OCI-LY7 (cell line): ENCODE measurements at regions of chr13 and their contacts with region 1.

Region 1: GRCh38 chr13:91185294-91185863 is 162.1 kb upstream of the MIR17HG start:
- DNase-seq: peak; percentile 44
- H3K4me3 ChIP-seq: no peak overlapping the region
- H3K27ac ChIP-seq: no peak overlapping the region
- H3K4me1 ChIP-seq: no peaks in the 10 kb centered on the region
- CTCF ChIP-seq: no peak

Region 2: GRCh38 chr13:90773681-90774080 is 411.7 kb before region 1 on chr13:
- CTCF ChIA-PET with region 1: no interaction called
- POLR2A ChIA-PET with region 1: no interaction called
- intact Hi-C with region 1: no loop called
- DNase-seq: no peak
- H3K4me3 ChIP-seq: no peak overlapping the region
- H3K27ac ChIP-seq: no peak overlapping the region
- H3K4me1 ChIP-seq: no peaks in the 10 kb centered on the region
- CTCF ChIP-seq: no peak

Region 3: DNA sequence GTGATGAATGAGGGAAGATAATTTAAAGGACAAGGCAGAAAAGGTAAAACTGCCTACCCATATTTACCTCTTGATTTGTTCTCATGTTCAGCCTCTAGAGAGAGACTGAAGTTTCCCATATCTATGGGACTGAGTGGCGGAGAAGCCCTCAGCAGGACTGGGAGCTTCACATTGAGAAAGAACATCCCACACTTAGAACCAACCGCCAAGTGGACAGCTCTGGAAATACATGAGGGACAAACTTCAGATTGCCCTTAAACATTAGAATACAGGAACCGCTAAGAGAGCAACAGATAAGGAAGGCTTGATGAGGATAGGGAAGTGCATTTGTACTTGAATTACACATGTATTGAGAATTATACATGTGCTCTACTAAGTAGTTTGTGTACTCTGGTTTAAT is 153.9 kb before region 1 on chr13:
- CTCF ChIA-PET with region 1: no interaction called
- POLR2A ChIA-PET with region 1: no interaction called
- intact Hi-C with region 1: no loop called
- DNase-seq: no peak
- H3K4me3 ChIP-seq: no peak overlapping the region
- H3K27ac ChIP-seq: no peak overlapping the region
- H3K4me1 ChIP-seq: no peaks in the 10 kb centered on the region
- CTCF ChIP-seq: no peak

Region 4: DNA sequence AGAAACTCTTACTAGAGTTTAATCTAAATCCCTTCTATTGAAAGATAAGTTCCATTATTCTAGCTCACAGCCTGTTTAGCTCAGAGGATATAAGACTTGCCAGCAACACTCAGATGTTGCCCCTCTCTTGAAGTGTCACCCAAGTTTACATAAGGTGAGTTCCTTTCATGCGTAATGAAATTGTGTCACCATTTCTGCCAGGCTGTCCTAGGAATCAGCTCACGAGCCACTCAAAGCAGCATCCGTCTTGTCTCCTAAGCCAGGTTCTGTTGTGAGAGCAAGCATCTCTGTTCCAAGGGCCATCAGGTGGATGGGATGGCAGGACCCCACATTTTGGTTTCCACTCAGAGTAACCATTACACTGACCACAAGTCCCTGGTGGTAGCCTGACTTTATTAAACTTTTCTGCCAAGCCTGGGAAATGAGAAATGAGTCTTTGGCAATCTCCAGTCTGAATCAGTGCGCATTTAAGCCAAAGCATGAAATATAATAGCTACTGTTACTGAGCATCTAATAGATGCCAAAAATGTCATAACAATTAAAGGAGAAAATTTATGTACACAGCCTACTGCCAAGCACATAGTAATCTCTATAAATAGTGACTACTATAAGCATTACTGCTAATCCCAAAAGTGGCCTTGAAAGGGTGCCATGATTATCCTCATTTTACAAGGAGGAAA is 17.5 kb before region 1 on chr13:
- CTCF ChIA-PET with region 1: interaction called, 3 read pairs
- POLR2A ChIA-PET with region 1: interaction called, 15 read pairs
- intact Hi-C with region 1: no loop called
- DNase-seq: no peak
- H3K4me3 ChIP-seq: no peak overlapping the region
- H3K27ac ChIP-seq: no peak overlapping the region
- H3K4me1 ChIP-seq: no peaks in the 10 kb centered on the region
- CTCF ChIP-seq: no peak

Region 5: GRCh38 chr13:91203430-91203829 is 18.1 kb after region 1 on chr13:
- CTCF ChIA-PET with region 1: interaction called, 4 read pairs
- POLR2A ChIA-PET with region 1: interaction called, 20 read pairs
- intact Hi-C with region 1: no loop called
- DNase-seq: no peak
- H3K4me3 ChIP-seq: no peak overlapping the region
- H3K27ac ChIP-seq: no peak overlapping the region
- H3K4me1 ChIP-seq: no peaks in the 10 kb centered on the region
- CTCF ChIP-seq: no peak

Region 6: DNA sequence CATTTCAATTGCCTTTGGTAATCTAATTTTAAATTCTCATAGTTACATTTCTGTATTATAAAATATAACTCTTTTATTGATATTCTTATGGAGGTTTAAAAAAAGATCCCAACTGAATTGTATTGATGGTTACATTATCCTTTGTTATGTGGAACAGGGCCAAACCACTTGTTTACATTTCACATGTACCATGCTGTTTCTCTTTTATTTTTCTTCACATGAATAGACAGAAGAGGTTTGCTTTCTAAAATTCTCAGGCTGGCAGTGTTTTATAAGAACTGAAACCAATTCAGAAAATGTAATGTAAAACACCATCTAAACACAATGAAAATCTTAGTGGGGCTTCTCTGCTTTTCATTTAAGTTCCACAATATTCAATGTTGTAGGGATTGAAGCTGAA is 335.6 kb after region 1 on chr13:
- CTCF ChIA-PET with region 1: no interaction called
- POLR2A ChIA-PET with region 1: no interaction called
- intact Hi-C with region 1: no loop called
- DNase-seq: no peak
- H3K4me3 ChIP-seq: no peak overlapping the region
- H3K27ac ChIP-seq: no peak overlapping the region
- H3K4me1 ChIP-seq: no peaks in the 10 kb centered on the region
- CTCF ChIP-seq: no peak